Activated CD8-positive, alpha-beta memory T cell treated with anti-CD3 and anti-CD28 coated beads, Interleukin-2, amount 10 ng/mL, durations not matched to agents 7 days and 5 days (primary cell): ENCODE measurements at regions of chr11 and their contacts with region 1.

Region 1: DNA sequence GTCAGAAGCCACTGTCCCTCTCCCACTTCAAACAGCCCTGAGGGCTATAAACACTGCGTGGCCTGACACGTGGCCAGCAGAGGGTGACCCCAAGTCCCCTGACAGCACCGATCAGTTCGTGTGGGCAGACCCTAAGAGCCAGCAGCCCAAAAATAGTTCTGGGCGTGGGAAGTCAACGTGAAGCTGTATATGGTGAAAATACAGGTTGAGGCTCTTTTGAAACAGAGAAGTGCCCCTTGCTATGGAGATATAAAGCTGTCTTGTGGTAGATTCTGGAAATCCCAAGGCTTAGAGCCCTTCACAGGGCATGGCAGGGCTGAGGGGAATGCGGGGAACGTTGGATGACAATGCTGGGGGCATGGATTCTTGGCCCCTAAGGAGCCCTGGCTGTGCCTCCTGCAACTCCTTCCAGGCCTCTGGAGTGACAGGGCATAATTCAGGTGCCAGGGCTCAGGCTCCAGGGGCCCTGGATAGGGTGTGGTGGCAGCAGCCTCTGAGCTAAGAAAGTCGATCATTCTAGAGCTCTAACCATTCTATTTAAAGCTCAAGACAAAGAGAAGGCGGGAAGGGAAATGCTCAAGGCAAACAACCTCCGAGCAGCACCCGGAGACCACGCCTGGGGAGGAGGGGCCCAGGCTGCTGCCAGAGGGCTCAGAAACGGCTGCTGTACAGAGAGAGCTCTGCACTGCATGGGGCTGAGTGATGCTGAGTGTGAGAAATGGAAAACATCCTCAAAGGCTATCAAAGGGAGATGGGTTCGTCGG is 60.4 kb upstream of the CD5 start:
- DNase-seq: peak; percentile 94
- ATAC-seq: peak; percentile 99
- H3K4me3 Mint-ChIP-seq: peak overlapping the region; percentile 74
- H3K27ac Mint-ChIP-seq: peak overlapping the region; percentile 94
- H3K4me1 Mint-ChIP-seq: peaks cover 50% of the 10 kb centered on the region
- H3K27me3 Mint-ChIP-seq: no peaks in the 10 kb centered on the region

Region 2: DNA sequence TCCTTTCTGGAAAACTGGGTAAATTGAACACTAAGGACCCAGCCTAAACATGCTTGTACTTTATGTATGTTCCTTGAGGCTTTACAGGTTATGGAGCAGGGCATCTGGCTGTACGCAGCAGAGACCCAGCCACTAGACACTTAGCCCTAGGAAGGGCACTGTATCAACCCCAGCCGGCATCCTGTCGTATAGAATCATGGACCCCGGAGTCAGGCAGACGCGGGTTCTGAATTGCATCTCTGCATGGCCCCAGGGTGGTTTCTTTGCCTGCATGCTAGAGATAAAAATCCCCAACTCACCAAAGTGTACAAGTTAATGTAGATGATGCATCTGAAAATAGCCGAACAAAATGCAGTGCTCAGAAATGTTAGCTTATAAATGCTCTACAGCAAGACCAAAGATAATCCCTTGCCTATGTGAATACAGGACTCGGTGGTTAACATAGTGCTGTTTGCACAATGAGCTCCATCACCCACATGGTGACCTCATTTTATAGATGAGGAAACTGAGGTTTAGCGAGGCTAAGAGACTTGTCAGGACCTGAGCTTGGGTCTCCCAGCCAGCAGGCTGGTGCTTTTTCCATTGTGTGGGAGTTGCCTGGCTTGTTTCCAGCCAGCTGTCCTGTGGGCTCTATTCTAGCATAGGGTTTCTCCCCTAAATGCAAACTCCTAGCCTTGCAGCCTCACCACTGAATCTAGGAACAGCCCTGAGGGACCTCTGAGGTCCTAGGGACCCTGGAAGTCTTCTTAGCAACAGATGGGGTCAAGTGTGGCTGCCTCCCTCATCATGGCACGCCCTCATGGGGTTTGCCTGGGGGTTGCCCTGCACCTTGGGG is 63.2 kb before region 1 on chr11:
- CTCF ChIA-PET with region 1: interaction called, 14 read pairs
- DNase-seq: peak; percentile 79
- ATAC-seq: peak; percentile 75
- H3K4me3 Mint-ChIP-seq: peak overlapping the region; percentile 68
- H3K27ac Mint-ChIP-seq: peak overlapping the region; percentile 90
- H3K4me1 Mint-ChIP-seq: peaks cover 84% of the 10 kb centered on the region
- H3K27me3 Mint-ChIP-seq: no peaks in the 10 kb centered on the region

Region 3: GRCh38 chr11:61061081-61061826 is 19.3 kb after region 1 on chr11:
- CTCF ChIA-PET with region 1: interaction called, 17 read pairs
- DNase-seq: peak; percentile 85
- ATAC-seq: peak; percentile 72
- H3K4me3 Mint-ChIP-seq: peak overlapping the region; percentile 60
- H3K27ac Mint-ChIP-seq: peak overlapping the region; percentile 89
- H3K4me1 Mint-ChIP-seq: peaks cover 65% of the 10 kb centered on the region
- H3K27me3 Mint-ChIP-seq: no peaks in the 10 kb centered on the region

Region 4: GRCh38 chr11:61071208-61071681 is 29.3 kb after region 1 on chr11:
- CTCF ChIA-PET with region 1: interaction called, 11 read pairs
- DNase-seq: peak; percentile 93
- ATAC-seq: peak; percentile 96
- H3K4me3 Mint-ChIP-seq: no peak overlapping the region
- H3K27ac Mint-ChIP-seq: peak overlapping the region; percentile 90
- H3K4me1 Mint-ChIP-seq: peaks cover 67% of the 10 kb centered on the region
- H3K27me3 Mint-ChIP-seq: peaks cover 3% of the 10 kb centered on the region